Mammary epithelial cell (primary cell): ENCODE measurements at regions of chr12 and their contacts with region 1.

Region 1: DNA sequence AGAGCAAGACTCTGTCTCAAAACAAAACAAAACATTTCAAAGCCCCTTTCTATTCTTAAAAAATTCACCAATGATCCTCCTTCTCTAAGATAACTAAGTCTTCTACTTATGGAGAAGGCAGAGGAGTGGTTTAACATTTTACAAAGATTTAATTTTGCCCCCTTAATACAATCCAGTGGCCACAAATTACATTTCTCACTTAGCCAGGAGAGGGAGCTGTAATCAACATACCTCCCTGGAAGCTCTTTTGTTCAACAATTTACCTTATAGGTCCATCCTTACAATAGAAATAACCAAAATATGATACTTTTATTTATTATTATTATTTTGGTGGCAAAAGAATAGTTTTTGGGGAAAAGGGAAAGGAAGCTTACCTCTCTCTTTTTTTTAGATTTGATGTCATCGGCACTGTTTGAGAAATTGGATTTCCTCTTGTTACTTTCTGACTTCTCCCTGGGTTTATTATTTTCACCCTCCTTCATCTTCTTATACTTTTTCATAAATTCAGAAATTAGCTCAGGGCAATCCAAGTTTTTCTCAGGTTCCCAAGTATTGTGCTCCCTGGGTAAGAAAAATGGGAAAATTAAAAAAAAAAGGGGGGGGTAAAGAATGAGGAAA is 28.1 kb downstream of the CBX5 start:
- DNase-seq: no peak
- H3K4me3 ChIP-seq: no peak overlapping the region
- H3K27ac ChIP-seq: no peak overlapping the region
- H3K4me1 ChIP-seq: no peaks in the 10 kb centered on the region
- H3K27me3 ChIP-seq: no peaks in the 10 kb centered on the region
- CTCF ChIP-seq: peak; percentile 68 to 76

Region 2: GRCh38 chr12:54026640-54027441 is 224.9 kb before region 1 on chr12:
- CTCF ChIA-PET with region 1: interaction called, 35 read pairs
- dilution Hi-C with region 1: no loop called
- in situ Hi-C with region 1: no loop called
- intact Hi-C with region 1: no loop called
- DNase-seq: no peak
- H3K4me3 ChIP-seq: no peak overlapping the region
- H3K27ac ChIP-seq: no peak overlapping the region
- H3K4me1 ChIP-seq: peaks cover 53% of the 10 kb centered on the region
- H3K27me3 ChIP-seq: no peaks in the 10 kb centered on the region
- CTCF ChIP-seq: no peak

Region 3: DNA sequence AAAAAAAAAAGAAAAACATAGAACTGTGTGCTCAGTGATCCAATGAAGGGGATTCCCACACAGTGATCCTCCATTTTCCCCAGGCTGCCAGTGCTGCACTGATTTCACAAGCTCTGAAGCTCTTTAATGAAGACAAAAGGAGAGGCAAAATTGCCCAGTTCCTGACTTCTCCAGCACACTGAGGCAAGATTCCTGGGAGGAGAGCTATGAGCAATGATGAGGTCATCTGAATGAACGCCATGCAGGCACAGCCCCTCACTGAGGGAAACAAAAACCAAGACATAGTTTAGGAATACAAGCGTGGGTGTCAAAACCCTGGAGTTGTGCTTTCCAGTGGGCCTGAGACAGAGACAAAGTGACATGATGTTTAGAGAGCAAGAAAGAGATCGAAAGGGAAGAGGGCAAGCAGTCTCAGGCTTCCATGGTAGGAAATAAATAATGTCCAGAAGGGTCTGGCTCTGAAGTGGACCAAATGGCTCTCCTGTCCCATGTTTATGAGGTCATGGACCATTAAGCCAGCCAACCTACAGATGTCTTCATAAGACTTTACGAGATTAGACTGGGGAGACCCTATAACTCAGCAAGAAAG is 22.1 kb before region 1 on chr12:
- CTCF ChIA-PET with region 1: interaction called, 12 read pairs
- dilution Hi-C with region 1: no loop called
- in situ Hi-C with region 1: no loop called
- intact Hi-C with region 1: no loop called
- DNase-seq: peak; percentile 94
- H3K4me3 ChIP-seq: no peak overlapping the region
- H3K27ac ChIP-seq: peak overlapping the region; percentile 64
- H3K4me1 ChIP-seq: peaks cover 19% of the 10 kb centered on the region
- H3K27me3 ChIP-seq: no peaks in the 10 kb centered on the region
- CTCF ChIP-seq: no peak

Region 4: GRCh38 chr12:54272214-54272613 is 20.4 kb after region 1 on chr12:
- CTCF ChIA-PET with region 1: no interaction called
- dilution Hi-C with region 1: no loop called
- in situ Hi-C with region 1: no loop called
- intact Hi-C with region 1: no loop called
- DNase-seq: no peak
- H3K4me3 ChIP-seq: no peak overlapping the region
- H3K27ac ChIP-seq: no peak overlapping the region
- H3K4me1 ChIP-seq: no peaks in the 10 kb centered on the region
- H3K27me3 ChIP-seq: no peaks in the 10 kb centered on the region
- CTCF ChIP-seq: no peak

Region 5: GRCh38 chr12:54294152-54294952 is 42.6 kb after region 1 on chr12:
- CTCF ChIA-PET with region 1: no interaction called
- dilution Hi-C with region 1: no loop called
- in situ Hi-C with region 1: no loop called
- intact Hi-C with region 1: loop called (anchors 5 kb)
- DNase-seq: no peak
- H3K4me3 ChIP-seq: no peak overlapping the region
- H3K27ac ChIP-seq: no peak overlapping the region
- H3K4me1 ChIP-seq: peaks cover under 1% of the 10 kb centered on the region
- H3K27me3 ChIP-seq: no peaks in the 10 kb centered on the region
- CTCF ChIP-seq: peak; percentile 96

Region 6: DNA sequence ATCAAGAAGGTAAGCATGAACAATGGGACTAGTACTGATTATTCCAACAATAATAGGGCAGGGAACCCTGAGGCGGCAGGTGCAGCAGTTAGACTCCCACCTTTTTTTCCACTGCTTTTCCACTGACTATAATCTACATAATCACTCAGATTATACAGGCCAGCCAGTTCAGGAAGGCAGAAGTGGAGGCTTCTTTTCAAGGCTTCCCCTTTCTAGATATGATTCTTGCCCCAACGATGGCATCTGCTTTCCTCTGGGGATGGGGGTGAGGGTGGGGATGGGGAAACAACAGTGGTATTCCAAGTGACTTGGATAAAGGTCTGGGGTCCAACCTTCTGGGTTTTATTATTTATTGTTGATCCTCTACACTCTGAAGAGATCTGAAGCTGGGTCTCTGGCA is 246.1 kb after region 1 on chr12:
- CTCF ChIA-PET with region 1: no interaction called
- dilution Hi-C with region 1: no loop called
- in situ Hi-C with region 1: no loop called
- intact Hi-C with region 1: no loop called
- DNase-seq: no peak
- H3K4me3 ChIP-seq: no peak overlapping the region
- H3K27ac ChIP-seq: no peak overlapping the region
- H3K4me1 ChIP-seq: no peaks in the 10 kb centered on the region
- H3K27me3 ChIP-seq: no peaks in the 10 kb centered on the region
- CTCF ChIP-seq: no peak